ENCODE measurements at regions of chr10 and their contacts with region 1.

Region 1: DNA sequence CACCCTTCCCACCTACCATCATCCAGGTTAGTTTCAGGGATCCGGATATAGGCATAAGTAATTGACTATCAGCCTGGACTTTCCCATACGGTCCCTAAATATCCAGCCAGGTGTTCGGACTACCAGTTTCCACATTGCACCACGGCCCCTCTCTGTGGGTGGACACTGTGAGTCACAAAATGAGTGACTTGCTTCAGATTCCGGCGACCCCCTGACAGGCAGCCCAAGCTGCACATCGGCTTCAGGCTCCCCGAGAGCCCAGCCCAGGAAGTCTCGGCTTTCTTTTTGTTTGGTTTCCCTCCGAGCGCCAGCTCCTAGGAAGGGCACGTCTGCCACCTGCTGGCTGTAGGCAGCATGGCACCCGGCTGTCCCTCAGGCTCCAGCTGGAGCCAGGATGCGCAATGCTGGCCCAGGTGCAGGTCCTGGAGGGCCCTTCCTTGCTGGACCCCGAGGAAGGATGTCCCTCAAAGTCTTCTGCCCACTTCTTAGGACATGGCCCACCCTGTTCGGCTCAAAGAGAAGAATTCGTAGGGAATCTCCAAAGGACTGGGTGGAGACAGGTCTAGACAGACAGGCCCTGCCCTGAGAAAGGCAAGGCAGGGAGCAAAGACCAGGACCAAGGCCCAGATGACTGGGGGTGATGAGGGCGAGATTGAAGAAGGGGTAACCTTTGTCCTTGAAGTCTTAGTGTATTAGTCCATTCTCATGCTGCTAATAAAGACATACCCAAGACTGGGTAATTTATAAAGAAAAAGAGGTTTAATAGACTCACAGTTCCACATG is 10.6 kb downstream of the HABP2 start:
- DNase-seq: peak; percentile 70 to 78 (median 77)
- ATAC-seq: peak; percentile 96
- H3K4me3 ChIP-seq: peak overlapping the region; percentile 27
- H3K27ac ChIP-seq: no peak overlapping the region
- H3K4me1 ChIP-seq: peaks cover 3 to 6% of the 10 kb centered on the region in 2 experiments; a peak in 3 of 5 replicates
- H3K27me3 ChIP-seq: peaks cover 0 to 17% of the 10 kb centered on the region in 2 experiments; a peak in 2 of 5 replicates
- CTCF ChIP-seq: peak; percentile 78 to 89 (median 83)
- EP300 ChIP-seq: no peak
- POLR2A ChIP-seq: no peak
- RAD21 ChIP-seq: peak; percentile 74 to 82

Region 2: DNA sequence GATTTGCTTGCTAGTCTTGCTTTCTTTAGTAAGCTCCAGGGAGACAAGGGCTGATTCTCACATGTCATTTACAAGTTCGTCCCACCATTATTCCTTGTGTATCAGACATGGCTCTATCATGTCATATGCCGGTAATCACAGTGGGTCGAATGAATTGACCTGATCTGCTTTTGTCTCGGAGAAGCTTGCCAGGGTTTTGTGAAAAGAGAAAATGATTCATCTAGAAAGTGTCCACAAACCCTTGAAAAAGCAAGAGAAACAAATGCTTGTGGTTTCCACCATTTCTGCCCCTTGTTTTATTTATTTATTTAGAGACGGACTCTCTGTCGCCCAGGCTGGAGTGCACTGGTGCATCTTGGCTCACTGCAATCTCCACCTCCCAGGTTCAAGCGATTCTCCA is 335.0 kb before region 1 on chr10:
- CTCF ChIA-PET with region 1: no interaction called
- POLR2A ChIA-PET with region 1: no interaction called
- in situ Hi-C with region 1: no loop called
- intact Hi-C with region 1: no loop called
- DNase-seq: no peak
- ATAC-seq: no peak
- H3K4me3 ChIP-seq: no peak overlapping the region
- H3K27ac ChIP-seq: no peak overlapping the region
- H3K4me1 ChIP-seq: no peaks in the 10 kb centered on the region
- H3K27me3 ChIP-seq: peaks cover 0 to 16% of the 10 kb centered on the region in 2 experiments; a peak in 2 of 5 replicates
- CTCF ChIP-seq: no peak
- EP300 ChIP-seq: no peak
- POLR2A ChIP-seq: no peak
- RAD21 ChIP-seq: no peak

Region 3: GRCh38 chr10:113385021-113385999 is 178.2 kb before region 1 on chr10:
- CTCF ChIA-PET with region 1: no interaction called
- POLR2A ChIA-PET with region 1: no interaction called
- in situ Hi-C with region 1: no loop called
- intact Hi-C with region 1: loop called (anchors 10 kb)
- DNase-seq: peak; percentile 19 to 61 (median 38)
- ATAC-seq: peak; percentile 97
- H3K4me3 ChIP-seq: no peak overlapping the region
- H3K27ac ChIP-seq: no peak overlapping the region
- H3K4me1 ChIP-seq: no peaks in the 10 kb centered on the region
- H3K27me3 ChIP-seq: peaks cover 0 to 9% of the 10 kb centered on the region in 2 experiments; a peak in 3 of 5 replicates
- CTCF ChIP-seq: peak; percentile 63 to 75 (median 68)
- EP300 ChIP-seq: no peak
- POLR2A ChIP-seq: no peak
- RAD21 ChIP-seq: peak; percentile 76 to 81

Region 4: GRCh38 chr10:113521123-113521795 is 42.2 kb before region 1 on chr10:
- CTCF ChIA-PET with region 1: interaction called, 3 read pairs
- POLR2A ChIA-PET with region 1: no interaction called
- in situ Hi-C with region 1: no loop called
- intact Hi-C with region 1: loop called (anchors 1 kb)
- DNase-seq: peak; percentile 46 to 62 (median 56)
- ATAC-seq: peak; percentile 87
- H3K4me3 ChIP-seq: no peak overlapping the region
- H3K27ac ChIP-seq: no peak overlapping the region
- H3K4me1 ChIP-seq: no peaks in the 10 kb centered on the region
- H3K27me3 ChIP-seq: peaks cover 0 to 8% of the 10 kb centered on the region in 2 experiments; a peak in 2 of 5 replicates
- CTCF ChIP-seq: peak; percentile 84 to 89 (median 84)
- EP300 ChIP-seq: no peak
- POLR2A ChIP-seq: no peak
- RAD21 ChIP-seq: peak; percentile 56 to 69

Measured in K562 (cell line).